ENCODE measurements at regions of chr11 and their contacts with region 1.

Region 1: DNA sequence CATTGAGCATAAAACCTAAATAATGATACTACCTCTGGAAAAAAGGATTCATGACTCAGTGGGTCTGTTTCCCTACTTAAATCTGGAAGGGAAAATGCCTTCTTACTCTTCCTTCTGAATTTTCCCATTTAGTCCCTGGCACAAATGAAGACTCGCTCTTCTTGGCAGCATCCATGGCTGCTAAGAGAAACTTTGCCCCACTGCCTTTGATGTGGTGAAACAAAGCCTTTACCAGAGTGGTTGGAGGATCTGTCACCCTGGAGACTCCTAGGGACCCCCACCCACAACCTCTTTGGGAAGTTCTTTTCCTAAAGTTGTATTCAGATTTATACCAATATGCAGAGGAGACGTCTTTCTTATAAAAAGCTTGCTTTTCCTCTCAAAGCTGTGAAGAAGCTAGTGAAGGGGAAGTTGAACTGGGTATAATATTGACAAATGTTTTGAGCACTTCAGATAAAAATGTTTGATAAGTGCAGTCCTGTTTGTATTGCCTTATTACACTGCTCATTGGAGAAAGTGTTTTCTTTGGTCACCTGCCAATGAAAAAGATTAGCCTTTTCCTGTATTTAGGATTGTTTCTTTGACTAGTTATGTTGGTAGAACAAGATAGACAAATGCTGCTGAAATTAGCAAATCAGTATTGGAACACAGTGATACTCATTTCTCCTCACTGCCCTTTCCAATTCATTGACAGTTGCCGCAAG is 77.3 kb downstream of the ARFGAP2 start:
- DNase-seq: peak in 1 of 2 experiments; percentile 76
- H3K4me3 ChIP-seq: no peak overlapping the region
- H3K27ac ChIP-seq: no peak overlapping the region
- H3K4me1 ChIP-seq: peaks cover 17% of the 10 kb centered on the region
- H3K27me3 ChIP-seq: no peaks in the 10 kb centered on the region
- CTCF ChIP-seq: no peak

Region 2: GRCh38 chr11:46991391-46991790 is 108.0 kb before region 1 on chr11:
- CTCF ChIA-PET with region 1: no interaction called
- POLR2A ChIA-PET with region 1: interaction called, 11 read pairs
- intact Hi-C with region 1: no loop called
- DNase-seq: no peak
- H3K4me3 ChIP-seq: no peak overlapping the region
- H3K27ac ChIP-seq: no peak overlapping the region
- H3K4me1 ChIP-seq: no peaks in the 10 kb centered on the region
- H3K27me3 ChIP-seq: no peaks in the 10 kb centered on the region
- CTCF ChIP-seq: no peak

Region 3: DNA sequence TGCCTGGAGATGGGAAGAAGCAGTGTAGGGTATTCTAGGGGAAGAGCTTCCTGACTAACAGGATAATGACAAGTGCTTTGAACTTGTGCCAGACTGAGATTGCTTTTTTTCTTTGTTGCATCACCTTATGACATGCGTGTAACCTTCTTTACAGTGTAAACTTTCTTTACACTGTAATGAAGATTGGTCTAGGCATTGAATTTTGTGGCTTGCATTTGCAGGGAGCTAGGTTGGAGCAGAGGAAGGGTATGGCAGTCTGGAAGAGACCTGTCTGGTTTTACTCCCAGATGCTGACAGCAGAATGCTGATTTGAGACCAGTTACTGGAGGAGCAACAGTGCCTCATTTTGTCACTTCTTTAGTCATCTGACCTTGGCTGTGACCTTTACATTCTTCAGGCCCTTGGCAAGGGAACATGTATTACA is 121.0 kb after region 1 on chr11:
- CTCF ChIA-PET with region 1: no interaction called
- POLR2A ChIA-PET with region 1: no interaction called
- intact Hi-C with region 1: no loop called
- DNase-seq: peak in 1 of 2 experiments; percentile 48
- H3K4me3 ChIP-seq: no peak overlapping the region
- H3K27ac ChIP-seq: peak overlapping the region; percentile 20; the same call in 1 of the 2 replicates
- H3K4me1 ChIP-seq: peaks cover 40% of the 10 kb centered on the region
- H3K27me3 ChIP-seq: no peaks in the 10 kb centered on the region
- CTCF ChIP-seq: no peak

Region 4: GRCh38 chr11:47233989-47234668 is 134.8 kb after region 1 on chr11:
- CTCF ChIA-PET with region 1: interaction called, 10 read pairs
- POLR2A ChIA-PET with region 1: no interaction called
- intact Hi-C with region 1: no loop called
- DNase-seq: peak in 1 of 2 experiments; percentile 89
- H3K4me3 ChIP-seq: peak overlapping the region; percentile 52
- H3K27ac ChIP-seq: peak overlapping the region; percentile 49
- H3K4me1 ChIP-seq: peaks cover 38% of the 10 kb centered on the region
- H3K27me3 ChIP-seq: no peaks in the 10 kb centered on the region
- CTCF ChIP-seq: peak; percentile 65

Region 5: GRCh38 chr11:47399860-47400767 is 300.7 kb after region 1 on chr11:
- CTCF ChIA-PET with region 1: interaction called, 12 read pairs
- POLR2A ChIA-PET with region 1: no interaction called
- intact Hi-C with region 1: no loop called
- DNase-seq: no peak
- H3K4me3 ChIP-seq: peak overlapping the region; percentile 36; the same call in 1 of the 2 replicates
- H3K27ac ChIP-seq: no peak overlapping the region
- H3K4me1 ChIP-seq: no peaks in the 10 kb centered on the region
- H3K27me3 ChIP-seq: no peaks in the 10 kb centered on the region
- CTCF ChIP-seq: no peak